SK-N-SH (cell line): ENCODE measurements at regions of chr7 and their contacts with region 1.

Region 1: GRCh38 chr7:23273141-23273599 is 26.0 kb upstream of the MALSU1 start:
- DNase-seq: peak; percentile 80
- H3K4me3 ChIP-seq: peak overlapping the region; percentile 7 to 25
- H3K27ac ChIP-seq: peak overlapping the region in 1 of 2 experiments; percentile 30; a peak in 2 of 4 replicates
- H3K4me1 ChIP-seq: peaks cover 5 to 9% of the 10 kb centered on the region in 2 experiments
- H3K27me3 ChIP-seq: no peaks in the 10 kb centered on the region
- CTCF ChIP-seq: peak; percentile 99
- EP300 ChIP-seq: peak in 1 of 2 experiments; percentile 71; a peak in 2 of 4 replicates
- RAD21 ChIP-seq: peak; percentile 83

Region 2: GRCh38 chr7:23220690-23221305 is 52.4 kb before region 1 on chr7:
- CTCF ChIA-PET with region 1: interaction called, 15 read pairs
- POLR2A ChIA-PET with region 1: no interaction called
- DNase-seq: no peak
- H3K4me3 ChIP-seq: no peak overlapping the region
- H3K27ac ChIP-seq: no peak overlapping the region
- H3K4me1 ChIP-seq: peaks cover 0 to 7% of the 10 kb centered on the region in 2 experiments; a peak in 1 of 4 replicates
- H3K27me3 ChIP-seq: 0 out of 2 replicates have a peak, but pooled peaks cover 4% of the 10 kb centered on the region
- CTCF ChIP-seq: no peak
- EP300 ChIP-seq: no peak
- RAD21 ChIP-seq: no peak

Region 3: DNA sequence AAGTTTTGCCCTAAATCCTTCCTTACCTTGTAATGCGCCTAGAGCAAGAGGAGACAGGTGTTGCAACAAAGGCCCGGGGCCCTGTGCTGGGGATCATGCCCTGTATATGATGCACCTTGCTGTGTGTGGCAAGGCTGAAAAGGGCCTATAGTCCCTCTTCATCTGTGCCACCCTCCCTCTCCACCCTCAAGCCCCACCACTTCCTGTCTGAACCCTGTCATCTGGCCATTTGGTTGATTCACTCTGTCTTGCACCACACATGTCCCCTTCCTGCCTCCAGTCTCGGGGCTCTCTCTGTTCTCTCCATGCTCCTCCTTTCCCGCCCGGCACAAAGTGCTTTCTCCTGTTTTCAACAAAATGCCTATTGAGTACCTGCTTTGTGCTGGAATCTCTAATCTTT is 14.4 kb after region 1 on chr7:
- CTCF ChIA-PET with region 1: interaction called, 359 read pairs
- POLR2A ChIA-PET with region 1: no interaction called
- DNase-seq: no peak
- H3K4me3 ChIP-seq: no peak overlapping the region
- H3K27ac ChIP-seq: no peak overlapping the region
- H3K4me1 ChIP-seq: no peaks in the 10 kb centered on the region
- H3K27me3 ChIP-seq: no peaks in the 10 kb centered on the region
- CTCF ChIP-seq: no peak
- EP300 ChIP-seq: no peak
- RAD21 ChIP-seq: no peak

Region 4: GRCh38 chr7:23357190-23358093 is 84.3 kb after region 1 on chr7:
- CTCF ChIA-PET with region 1: interaction called, 12 read pairs
- POLR2A ChIA-PET with region 1: no interaction called
- DNase-seq: no peak
- H3K4me3 ChIP-seq: no peak overlapping the region; a peak in 1 of 4 replicates
- H3K27ac ChIP-seq: peak overlapping the region in 1 of 2 experiments; percentile 58; a peak in 2 of 4 replicates
- H3K4me1 ChIP-seq: peaks cover 0 to 11% of the 10 kb centered on the region in 2 experiments; a peak in 1 of 4 replicates
- H3K27me3 ChIP-seq: no peaks in the 10 kb centered on the region
- CTCF ChIP-seq: peak; percentile 79
- EP300 ChIP-seq: no peak
- RAD21 ChIP-seq: peak; percentile 65

Region 5: GRCh38 chr7:23377134-23377533 is 104.0 kb after region 1 on chr7:
- CTCF ChIA-PET with region 1: no interaction called
- POLR2A ChIA-PET with region 1: no interaction called
- DNase-seq: no peak
- H3K4me3 ChIP-seq: no peak overlapping the region
- H3K27ac ChIP-seq: peak overlapping the region in 1 of 2 experiments; percentile 9; a peak in 1 of 4 replicates
- H3K4me1 ChIP-seq: peaks cover 3 to 27% of the 10 kb centered on the region in 2 experiments; a peak in 3 of 4 replicates
- H3K27me3 ChIP-seq: no peaks in the 10 kb centered on the region
- CTCF ChIP-seq: no peak
- EP300 ChIP-seq: no peak
- RAD21 ChIP-seq: no peak

Region 6: DNA sequence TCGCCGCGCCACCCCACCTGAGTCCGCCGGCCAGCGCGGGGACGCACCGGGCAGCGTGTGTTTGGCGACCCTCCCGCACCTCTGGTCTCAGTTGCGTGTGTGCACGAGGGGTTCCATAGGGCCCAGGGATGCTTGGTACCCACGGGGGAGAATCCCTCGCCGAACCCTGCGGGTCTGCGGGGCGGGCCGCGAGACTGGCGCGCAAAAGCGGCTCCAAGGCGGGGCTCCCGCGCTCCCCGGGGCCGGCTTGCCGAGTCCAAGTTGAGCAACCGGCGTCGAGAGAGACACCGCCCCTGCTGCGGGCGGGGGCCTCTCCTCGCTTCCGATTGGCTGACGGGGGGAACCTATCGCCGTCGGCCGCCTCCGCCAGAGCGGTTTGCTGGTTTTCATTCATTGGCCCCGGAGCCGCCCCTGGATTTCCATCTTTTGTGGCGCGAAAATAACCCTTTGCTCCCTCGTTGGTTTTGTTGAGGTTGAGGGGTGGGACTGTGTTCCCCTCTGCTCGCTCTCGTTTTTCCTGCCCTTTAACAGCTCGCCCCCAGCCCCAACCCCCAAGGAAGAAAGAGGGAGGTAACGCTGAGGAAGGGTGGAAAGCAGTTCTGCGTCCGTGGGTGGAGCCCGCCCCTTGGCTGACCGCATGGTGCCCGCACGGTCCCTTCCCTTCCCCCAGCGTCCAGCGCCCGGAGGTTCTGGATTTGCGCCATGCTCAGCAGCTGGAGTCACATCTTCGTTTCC is 201.1 kb after region 1 on chr7:
- CTCF ChIA-PET with region 1: interaction called, 13 read pairs
- POLR2A ChIA-PET with region 1: no interaction called
- DNase-seq: peak; percentile 94
- H3K4me3 ChIP-seq: peak overlapping the region; percentile 88 to 89
- H3K27ac ChIP-seq: peak overlapping the region; percentile 93 to 100
- H3K4me1 ChIP-seq: peaks cover 4 to 37% of the 10 kb centered on the region in 2 experiments; a peak in 3 of 4 replicates
- H3K27me3 ChIP-seq: no peaks in the 10 kb centered on the region
- CTCF ChIP-seq: no peak
- EP300 ChIP-seq: peak; percentile 5 to 34; a peak in 2 of 4 replicates
- RAD21 ChIP-seq: no peak; the same call in 1 of the 2 replicates

Region 7: GRCh38 chr7:23546897-23547572 is 273.9 kb after region 1 on chr7:
- CTCF ChIA-PET with region 1: interaction called, 72 read pairs
- POLR2A ChIA-PET with region 1: no interaction called
- DNase-seq: peak; percentile 83
- H3K4me3 ChIP-seq: no peak overlapping the region
- H3K27ac ChIP-seq: no peak overlapping the region
- H3K4me1 ChIP-seq: no peaks in the 10 kb centered on the region
- H3K27me3 ChIP-seq: no peaks in the 10 kb centered on the region; the same call in 1 of the 2 replicates
- CTCF ChIP-seq: peak; percentile 100
- EP300 ChIP-seq: no peak
- RAD21 ChIP-seq: peak; percentile 97